ENCODE measurements at regions of chr3 and their contacts with region 1.

Region 1: DNA sequence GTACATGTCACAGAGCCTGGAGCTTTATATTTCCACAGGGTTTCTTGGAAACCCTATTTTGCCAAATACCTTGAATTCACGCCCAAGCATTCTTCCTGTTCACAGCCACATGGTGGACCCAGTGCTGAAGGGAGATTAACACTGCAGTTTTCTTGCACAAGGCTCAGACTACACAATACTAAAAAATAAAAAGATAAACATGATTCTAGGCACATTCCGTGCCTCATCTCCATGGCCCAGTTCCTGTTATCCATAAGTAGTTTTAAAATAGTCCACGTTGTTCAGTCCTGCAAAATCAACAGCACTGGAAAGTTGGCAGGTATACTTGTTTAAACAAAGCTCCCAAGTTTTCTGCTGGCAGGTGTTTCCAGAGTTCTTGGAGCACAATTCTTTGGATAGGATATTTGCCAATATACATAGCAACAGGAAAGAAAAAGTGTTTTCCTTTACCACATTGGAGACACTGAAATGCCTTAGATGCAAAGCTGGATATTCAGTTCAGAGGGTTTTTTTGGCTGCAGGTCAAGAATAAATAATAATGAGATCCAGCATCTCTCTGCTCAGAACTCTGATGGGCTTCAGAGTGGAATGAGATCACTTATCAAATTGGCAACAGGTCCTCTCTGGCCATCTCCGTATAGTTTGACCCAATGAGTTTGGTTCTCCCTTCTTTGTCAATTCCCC is 88.1 kb upstream of the TGFBR2 start:
- DNase-seq: no peak
- H3K4me3 ChIP-seq: no peak overlapping the region
- H3K27ac ChIP-seq: peak overlapping the region; percentile 79 to 86 (median 80)
- H3K4me1 ChIP-seq: peaks cover 15 to 70% (median 67%) of the 10 kb centered on the region in 4 donors
- H3K27me3 ChIP-seq: no peaks in the 10 kb centered on the region
- CTCF ChIP-seq: peak in 2 of 3 experiments; percentile 23 to 48
- EP300 ChIP-seq: peak; percentile 93
- POLR2A ChIP-seq: no peak

Region 2: DNA sequence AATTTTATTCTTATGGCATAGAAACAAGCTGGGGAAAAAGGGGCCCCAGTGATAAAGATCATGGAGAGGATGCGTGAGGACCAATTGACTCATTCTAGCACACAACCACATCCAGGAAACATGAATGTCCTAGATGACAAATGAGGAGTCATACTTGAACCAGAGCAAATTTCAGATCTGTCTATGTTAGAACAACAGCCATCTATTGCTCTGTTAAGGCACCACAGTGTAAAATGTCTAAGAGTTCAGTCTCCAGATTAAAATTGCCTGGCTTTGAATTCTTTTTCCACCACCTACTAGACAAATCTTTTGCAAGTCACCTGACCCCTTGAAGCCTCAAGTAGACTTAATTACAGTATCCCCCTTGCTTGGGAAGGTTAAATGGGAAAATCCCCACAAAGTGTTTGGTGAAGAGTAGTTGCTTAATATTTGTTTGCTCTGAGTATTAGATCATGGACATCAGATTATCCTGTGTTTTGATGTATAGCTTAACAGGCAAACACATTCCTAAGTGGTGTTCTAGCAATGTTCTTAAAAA is 170.6 kb before region 1 on chr3:
- intact Hi-C with region 1: no loop called
- DNase-seq: no peak
- H3K4me3 ChIP-seq: no peak overlapping the region
- H3K27ac ChIP-seq: no peak overlapping the region
- H3K4me1 ChIP-seq: peaks cover 16 to 42% (median 28%) of the 10 kb centered on the region in 4 donors
- H3K27me3 ChIP-seq: no peaks in the 10 kb centered on the region
- CTCF ChIP-seq: no peak
- EP300 ChIP-seq: no peak
- POLR2A ChIP-seq: no peak

Region 3: GRCh38 chr3:30606301-30607031 is 88.1 kb after region 1 on chr3 and contains the start of gene TGFBR2:
- intact Hi-C with region 1: loop called (anchors 2 kb)
- DNase-seq: peak; percentile 99
- H3K4me3 ChIP-seq: peak within 1 kb of the TSS; percentile 79 to 96 (median 94)
- H3K27ac ChIP-seq: peak within 1 kb of the TSS; percentile 91 to 99 (median 99)
- H3K4me1 ChIP-seq: peaks cover 21 to 54% (median 42%) of the 10 kb centered on the region in 4 donors
- H3K27me3 ChIP-seq: no peaks in the 10 kb centered on the region
- CTCF ChIP-seq: peak; percentile 17 to 40 (median 30)
- EP300 ChIP-seq: no peak
- POLR2A ChIP-seq: peak; percentile 54
- total RNA-seq, gene TGFBR2: 202 to 292 (median 261) TPM

Measured in esophagus muscularis mucosa (tissue), 4 donors.